ENCODE measurements at regions of chr12 and their contacts with region 1.

Region 1: GRCh38 chr12:10677651-10678050 is 3.8 kb upstream of the STYK1 start:
- DNase-seq: no peak
- H3K4me3 ChIP-seq: no peak overlapping the region
- CTCF ChIP-seq: no peak

Region 2: DNA sequence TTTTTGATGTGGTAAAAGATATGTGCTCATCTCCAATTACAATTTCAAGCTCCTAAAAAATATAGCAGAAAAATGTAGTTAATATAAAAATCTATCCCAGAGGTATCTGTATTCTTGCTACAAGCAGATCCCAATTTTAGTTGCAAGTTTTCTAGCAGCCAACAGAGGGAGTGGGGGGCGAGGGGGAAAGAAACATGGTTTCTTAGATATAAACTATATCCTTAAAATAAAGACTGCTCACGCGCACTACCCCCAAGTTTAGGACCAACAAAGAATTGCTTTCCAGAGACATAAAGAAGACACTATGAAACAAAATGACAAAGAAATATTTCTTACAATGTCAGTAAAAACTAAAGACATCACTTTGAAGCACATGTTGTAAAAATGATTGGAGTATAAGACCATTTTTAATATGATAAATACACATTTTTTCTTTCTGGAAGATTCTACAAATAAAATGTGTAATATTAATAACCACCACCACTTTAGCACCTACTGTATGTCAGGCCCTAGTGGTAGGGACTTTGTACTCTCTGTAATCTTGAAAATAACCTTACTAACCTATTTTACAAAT is 69.7 kb before region 1 on chr12:
- CTCF ChIA-PET with region 1: interaction called, 21 read pairs
- POLR2A ChIA-PET with region 1: no interaction called
- DNase-seq: no peak
- H3K4me3 ChIP-seq: no peak overlapping the region
- CTCF ChIP-seq: peak; percentile 39

Measured in AG04449 (cell line).